Ascending aorta (tissue), 2 donors: ENCODE measurements at regions of chr14 and their contacts with region 1.

Region 1: GRCh38 chr14:51547260-51547659 is 104.5 kb upstream of the FRMD6 start:
- DNase-seq: peak; percentile 10 to 88
- H3K4me3 ChIP-seq: no peak overlapping the region
- H3K27ac ChIP-seq: peak overlapping the region; percentile 59 to 60
- H3K4me1 ChIP-seq: peaks cover 0 to 11% of the 10 kb centered on the region in 2 donors
- H3K27me3 ChIP-seq: no peaks in the 10 kb centered on the region
- CTCF ChIP-seq: no peak

Region 2: DNA sequence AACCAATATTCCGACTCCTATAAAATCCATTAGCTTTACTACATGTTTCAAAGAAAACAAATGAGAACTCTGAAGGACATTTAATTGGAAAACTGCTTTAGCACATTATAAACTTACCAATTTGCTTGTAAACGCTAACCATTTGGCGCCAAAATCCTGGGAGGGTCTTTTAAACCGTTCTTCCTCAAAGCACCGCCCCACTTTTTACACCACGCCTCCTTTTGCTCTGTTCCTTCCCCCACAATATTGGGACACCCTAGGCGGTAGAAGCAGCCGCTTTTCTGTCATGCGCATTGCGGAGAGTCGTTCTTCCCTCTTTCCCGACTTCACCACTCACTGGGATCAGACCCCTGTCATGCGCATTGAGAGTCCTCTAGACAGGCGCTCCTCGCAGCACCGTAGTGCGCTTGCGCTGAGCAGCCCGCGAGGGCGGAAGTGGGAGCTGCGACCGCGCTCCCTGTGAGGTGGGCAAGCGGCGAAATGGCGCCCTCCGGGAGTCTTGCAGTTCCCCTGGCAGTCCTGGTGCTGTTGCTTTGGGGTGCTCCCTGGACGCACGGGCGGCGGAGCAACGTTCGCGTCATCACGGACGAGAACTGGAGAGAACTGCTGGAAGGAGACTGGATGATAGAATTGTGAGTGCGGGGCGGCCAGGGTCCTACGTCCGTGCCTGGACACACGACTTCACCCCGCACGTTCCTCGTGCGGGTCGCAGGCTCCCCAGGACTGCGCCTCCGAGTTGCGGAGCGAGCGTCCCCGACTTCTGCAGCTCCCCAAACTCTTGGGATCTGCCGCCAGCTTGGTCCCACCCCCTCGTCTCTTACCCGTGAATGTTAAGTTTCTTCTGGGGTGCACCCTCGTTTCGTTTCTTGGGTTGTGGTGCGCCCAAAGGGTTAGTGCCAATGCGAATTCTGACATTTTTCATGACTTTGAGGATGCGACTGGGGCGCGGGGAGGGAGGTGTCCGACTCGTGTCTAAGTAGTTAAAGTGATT is 307.2 kb before region 1 on chr14 and contains the start of gene TMX1:
- intact Hi-C with region 1: loop called (anchors 2 kb)
- DNase-seq: peak; percentile 92 to 98
- H3K4me3 ChIP-seq: peak within 1 kb of the TSS; percentile 93 to 96
- H3K27ac ChIP-seq: peak within 1 kb of the TSS; percentile 84 to 88
- H3K4me1 ChIP-seq: peaks cover 0 to 5% of the 10 kb centered on the region in 2 donors
- H3K27me3 ChIP-seq: no peaks in the 10 kb centered on the region
- CTCF ChIP-seq: no peak
- total RNA-seq, gene TMX1: 5.1 TPM

Region 3: GRCh38 chr14:51251458-51251857 is 295.8 kb before region 1 on chr14:
- intact Hi-C with region 1: no loop called
- DNase-seq: no peak
- H3K4me3 ChIP-seq: no peak overlapping the region
- H3K27ac ChIP-seq: no peak overlapping the region
- H3K4me1 ChIP-seq: no peaks in the 10 kb centered on the region
- H3K27me3 ChIP-seq: no peaks in the 10 kb centered on the region
- CTCF ChIP-seq: no peak

Region 4: DNA sequence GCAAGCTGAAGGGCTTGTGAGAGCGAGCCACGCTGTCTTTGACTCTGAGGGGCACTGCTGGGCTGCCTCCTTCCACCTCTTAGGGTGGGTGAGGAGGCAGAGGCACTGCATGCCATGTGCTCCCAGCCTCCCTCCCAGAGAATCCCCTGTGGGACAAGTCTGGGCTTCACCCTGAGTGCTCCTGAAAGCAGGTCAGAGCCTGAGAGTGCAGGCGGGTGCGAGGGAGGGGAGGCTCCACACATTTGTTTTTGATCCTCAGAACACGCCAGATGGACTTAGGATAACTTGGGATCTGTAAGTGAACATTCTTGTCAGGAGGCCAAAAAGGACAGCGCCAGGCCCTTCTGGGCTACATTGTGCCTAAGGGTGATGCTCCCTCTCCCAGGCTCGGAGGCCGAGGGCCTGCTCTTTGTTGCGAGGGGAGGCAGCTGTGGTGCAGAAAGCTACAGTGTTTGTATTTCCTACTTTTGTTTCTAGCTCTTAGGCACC is 151.9 kb before region 1 on chr14:
- intact Hi-C with region 1: loop called (anchors 5 kb)
- DNase-seq: no peak
- H3K4me3 ChIP-seq: no peak overlapping the region
- H3K27ac ChIP-seq: peak overlapping the region; percentile 79 to 85
- H3K4me1 ChIP-seq: peaks cover 4 to 15% of the 10 kb centered on the region in 2 donors
- H3K27me3 ChIP-seq: no peaks in the 10 kb centered on the region
- CTCF ChIP-seq: no peak

Region 5: GRCh38 chr14:51442513-51443175 is 104.6 kb before region 1 on chr14:
- intact Hi-C with region 1: loop called (anchors 2 kb)
- DNase-seq: peak in 1 of 2 donors; percentile 75
- H3K4me3 ChIP-seq: no peak overlapping the region
- H3K27ac ChIP-seq: peak overlapping the region; percentile 27 to 49
- H3K4me1 ChIP-seq: peaks cover 0 to 9% of the 10 kb centered on the region in 2 donors
- H3K27me3 ChIP-seq: no peaks in the 10 kb centered on the region
- CTCF ChIP-seq: no peak

Region 6: DNA sequence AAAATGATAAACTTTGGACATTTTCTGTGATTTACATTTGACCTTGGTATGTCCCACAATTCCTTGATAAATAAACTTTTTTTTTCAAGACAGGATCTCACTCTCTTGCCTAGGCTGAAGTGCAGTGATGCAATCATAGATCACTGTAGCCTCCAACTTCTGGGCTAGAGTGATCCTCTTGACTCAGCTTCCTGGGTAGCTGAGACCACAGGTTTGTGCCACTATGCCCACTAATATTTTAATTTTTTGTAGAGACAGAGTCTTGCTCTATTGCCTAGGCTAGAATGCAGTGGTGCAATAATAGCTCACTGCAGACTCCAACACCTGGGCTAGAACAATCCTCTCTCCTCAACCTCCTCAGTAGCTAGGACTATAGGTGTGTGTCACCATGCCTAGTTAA is 641.1 kb after region 1 on chr14:
- intact Hi-C with region 1: no loop called
- DNase-seq: no peak
- H3K4me3 ChIP-seq: no peak overlapping the region
- H3K27ac ChIP-seq: no peak overlapping the region
- H3K4me1 ChIP-seq: no peaks in the 10 kb centered on the region
- H3K27me3 ChIP-seq: no peaks in the 10 kb centered on the region
- CTCF ChIP-seq: no peak